IMR-90 (cell line): ENCODE measurements at regions of chr3 and their contacts with region 1.

Region 1: GRCh38 chr3:136861890-136862616 is at the start of gene NCK1:
- DNase-seq: peak; percentile 98
- ATAC-seq: peak; percentile 98
- H3K4me3 ChIP-seq: peak within 1 kb of the TSS; percentile 85
- H3K27ac ChIP-seq: peak within 1 kb of the TSS; percentile 94
- H3K4me1 ChIP-seq: peaks cover 6% of the 10 kb centered on the region
- H3K27me3 ChIP-seq: no peaks in the 10 kb centered on the region
- CTCF ChIP-seq: 0 out of 2 replicates have a peak, but pooled peaks have one; percentile 3
- POLR2A ChIP-seq: peak; percentile 81
- RAD21 ChIP-seq: no peak
- total RNA-seq, gene NCK1: 23.7 and 50.3 TPM in 2 replicates

Region 2: DNA sequence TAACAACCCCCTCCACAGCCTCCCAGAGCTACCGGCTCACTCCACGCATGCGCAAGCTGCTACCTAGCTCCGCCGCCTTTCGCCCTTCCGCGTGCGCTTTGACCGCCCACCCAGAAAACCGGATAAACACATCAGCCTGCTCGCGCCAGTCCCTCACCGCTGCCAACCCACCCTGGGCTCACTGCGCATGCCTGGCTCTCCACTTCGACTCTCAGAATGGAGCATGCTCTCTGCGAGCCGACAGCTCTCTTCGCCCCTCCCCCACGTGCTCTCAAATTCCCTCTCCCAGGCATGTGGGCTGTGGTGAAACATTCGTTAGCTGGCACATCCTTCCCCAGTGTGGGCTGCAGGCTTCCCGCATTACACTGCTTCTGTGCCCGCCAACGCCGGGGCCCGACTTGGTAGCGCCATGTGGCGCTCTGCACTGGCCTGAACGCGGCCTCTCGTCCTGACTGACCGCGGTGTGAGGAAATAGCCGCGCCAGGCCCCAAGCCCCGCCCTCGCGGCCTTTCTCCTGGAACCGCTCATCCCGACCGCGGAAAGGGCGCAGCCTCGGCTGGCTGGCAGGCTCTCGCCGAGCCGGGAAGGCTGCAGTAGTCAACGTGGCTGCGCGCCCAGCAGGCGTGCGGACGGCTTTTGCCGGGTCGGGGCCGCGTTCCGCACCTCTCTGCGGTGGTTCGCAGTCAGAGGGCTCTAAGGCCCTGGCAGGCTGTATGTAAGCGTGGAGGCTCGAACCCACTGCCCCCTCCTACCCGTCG is 665.5 kb before region 1 on chr3:
- CTCF ChIA-PET with region 1: no interaction called
- POLR2A ChIA-PET with region 1: no interaction called
- dilution Hi-C with region 1: no loop called
- in situ Hi-C with region 1: no loop called
- intact Hi-C with region 1: loop called (anchors 5 kb)
- DNase-seq: peak; percentile 100
- ATAC-seq: peak; percentile 79
- H3K4me3 ChIP-seq: peak overlapping the region; percentile 97
- H3K27ac ChIP-seq: peak overlapping the region; percentile 81
- H3K4me1 ChIP-seq: peaks cover 3% of the 10 kb centered on the region; the same call in 1 of the 2 replicates
- H3K27me3 ChIP-seq: no peaks in the 10 kb centered on the region
- CTCF ChIP-seq: no peak
- POLR2A ChIP-seq: peak; percentile 88
- RAD21 ChIP-seq: peak; percentile 9; the same call in 1 of the 2 replicates

Region 3: GRCh38 chr3:136678981-136679380 is 183.1 kb before region 1 on chr3:
- CTCF ChIA-PET with region 1: no interaction called
- POLR2A ChIA-PET with region 1: interaction called, 21 read pairs
- dilution Hi-C with region 1: no loop called
- in situ Hi-C with region 1: no loop called
- intact Hi-C with region 1: no loop called
- DNase-seq: no peak
- ATAC-seq: no peak
- H3K4me3 ChIP-seq: no peak overlapping the region
- H3K27ac ChIP-seq: no peak overlapping the region
- H3K4me1 ChIP-seq: peaks cover 2% of the 10 kb centered on the region; the same call in 1 of the 2 replicates
- H3K27me3 ChIP-seq: no peaks in the 10 kb centered on the region
- CTCF ChIP-seq: no peak
- POLR2A ChIP-seq: no peak
- RAD21 ChIP-seq: no peak

Region 4: GRCh38 chr3:136787349-136787748 is 74.7 kb before region 1 on chr3:
- CTCF ChIA-PET with region 1: no interaction called
- POLR2A ChIA-PET with region 1: no interaction called
- dilution Hi-C with region 1: no loop called
- in situ Hi-C with region 1: no loop called
- intact Hi-C with region 1: loop called (anchors 2 kb)
- DNase-seq: peak; percentile 45
- ATAC-seq: peak; percentile 19
- H3K4me3 ChIP-seq: no peak overlapping the region
- H3K27ac ChIP-seq: peak overlapping the region; percentile 90
- H3K4me1 ChIP-seq: peaks cover 18% of the 10 kb centered on the region
- H3K27me3 ChIP-seq: no peaks in the 10 kb centered on the region
- CTCF ChIP-seq: no peak
- POLR2A ChIP-seq: no peak
- RAD21 ChIP-seq: no peak

Region 5: DNA sequence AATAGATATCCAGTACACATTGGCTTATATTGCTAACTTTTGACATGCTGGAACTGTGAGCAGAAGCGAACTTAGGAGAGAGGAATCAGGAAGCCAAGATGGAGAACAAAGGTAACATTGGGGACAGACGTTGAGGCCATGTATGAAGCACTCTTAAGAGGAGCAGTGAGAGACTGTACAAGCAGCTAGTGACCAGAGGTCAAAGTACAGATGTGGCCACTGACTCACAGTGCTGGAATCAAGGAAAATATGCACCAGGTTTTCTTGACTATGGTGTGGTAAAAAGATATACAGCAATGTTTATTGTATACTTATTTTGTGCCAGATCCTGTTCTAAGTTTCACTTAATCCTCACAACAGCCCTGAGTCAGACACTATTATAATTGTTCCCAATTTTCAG is 93.8 kb after region 1 on chr3:
- CTCF ChIA-PET with region 1: no interaction called
- POLR2A ChIA-PET with region 1: no interaction called
- dilution Hi-C with region 1: no loop called
- in situ Hi-C with region 1: no loop called
- intact Hi-C with region 1: loop called (anchors 5 kb)
- DNase-seq: peak; percentile 96
- ATAC-seq: peak; percentile 87
- H3K4me3 ChIP-seq: no peak overlapping the region
- H3K27ac ChIP-seq: peak overlapping the region; percentile 66; the same call in 1 of the 2 replicates
- H3K4me1 ChIP-seq: peaks cover 24% of the 10 kb centered on the region
- H3K27me3 ChIP-seq: no peaks in the 10 kb centered on the region
- CTCF ChIP-seq: no peak
- POLR2A ChIP-seq: no peak
- RAD21 ChIP-seq: no peak

Region 6: GRCh38 chr3:136984837-136985236 is 122.8 kb after region 1 on chr3:
- CTCF ChIA-PET with region 1: no interaction called
- POLR2A ChIA-PET with region 1: interaction called, 11 read pairs
- dilution Hi-C with region 1: no loop called
- in situ Hi-C with region 1: no loop called
- intact Hi-C with region 1: no loop called
- DNase-seq: peak; percentile 74
- ATAC-seq: peak; percentile 83
- H3K4me3 ChIP-seq: no peak overlapping the region
- H3K27ac ChIP-seq: no peak overlapping the region
- H3K4me1 ChIP-seq: peaks cover 8% of the 10 kb centered on the region
- H3K27me3 ChIP-seq: no peaks in the 10 kb centered on the region
- CTCF ChIP-seq: no peak
- POLR2A ChIP-seq: no peak
- RAD21 ChIP-seq: no peak